GM13977 (cell line): ENCODE measurements at regions of chr4 and their contacts with region 1.

Region 1: GRCh38 chr4:8594097-8595038 is 1.8 kb downstream of the CPZ start:
- DNase-seq: peak; percentile 91
- CTCF ChIP-seq: peak; percentile 58

Region 2: GRCh38 chr4:8315435-8316250 is 278.7 kb before region 1 on chr4:
- in situ Hi-C with region 1: no loop called
- DNase-seq: no peak
- CTCF ChIP-seq: no peak

Region 3: GRCh38 chr4:8468746-8469535 is 125.4 kb before region 1 on chr4:
- in situ Hi-C with region 1: loop called (anchors 25 kb)
- DNase-seq: peak; percentile 87
- CTCF ChIP-seq: peak; percentile 97